ENCODE measurements at regions of chr11 and their contacts with region 1.

Region 1: DNA sequence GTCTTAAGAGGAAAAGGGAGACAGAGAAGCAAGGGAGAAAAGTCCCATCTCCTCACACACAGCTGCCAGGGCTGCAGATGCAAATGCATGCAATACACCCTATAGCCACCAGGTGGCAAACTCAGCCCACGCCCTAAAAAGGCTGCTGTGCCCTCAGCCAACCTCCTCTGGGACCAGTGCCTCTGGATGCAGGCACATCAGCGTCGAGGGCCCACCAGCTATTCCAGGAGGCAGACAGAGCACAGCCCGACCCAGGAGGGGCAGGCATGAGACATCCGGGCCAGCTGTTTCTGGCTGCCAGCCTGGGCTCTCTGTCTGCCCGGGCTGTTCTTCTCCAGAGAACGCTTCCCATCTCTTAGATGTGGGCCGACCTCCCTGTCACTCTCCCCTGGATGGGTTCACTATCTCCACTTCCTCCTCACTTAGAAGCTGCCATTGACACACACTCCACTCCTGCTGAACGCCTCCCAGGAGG is 39.7 kb downstream of the TPBGL start:
- DNase-seq: no peak
- H3K4me3 ChIP-seq: no peak overlapping the region
- CTCF ChIP-seq: peak; percentile 94

Region 2: DNA sequence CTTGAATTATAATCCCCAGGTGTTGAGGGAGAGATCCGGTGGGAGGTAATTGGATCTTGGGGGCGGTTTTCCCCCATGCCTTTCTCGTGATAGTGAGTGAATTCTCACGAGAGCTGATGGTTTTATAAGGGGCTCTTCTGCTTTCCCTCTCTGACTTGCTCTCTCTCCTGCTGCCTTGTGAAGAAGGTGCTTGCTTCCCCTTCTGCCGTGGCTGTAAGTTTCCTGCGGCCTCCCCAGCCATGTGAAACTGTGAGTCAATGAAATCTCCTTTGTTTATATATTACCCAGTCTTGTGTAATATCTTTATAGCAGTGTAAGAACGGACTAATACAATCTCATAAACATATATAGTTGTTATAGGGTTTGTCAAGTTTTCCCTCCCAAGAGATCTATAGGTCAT is 845.7 kb before region 1 on chr11:
- CTCF ChIA-PET with region 1: no interaction called
- POLR2A ChIA-PET with region 1: no interaction called
- DNase-seq: no peak
- H3K4me3 ChIP-seq: no peak overlapping the region
- CTCF ChIP-seq: no peak

Region 3: DNA sequence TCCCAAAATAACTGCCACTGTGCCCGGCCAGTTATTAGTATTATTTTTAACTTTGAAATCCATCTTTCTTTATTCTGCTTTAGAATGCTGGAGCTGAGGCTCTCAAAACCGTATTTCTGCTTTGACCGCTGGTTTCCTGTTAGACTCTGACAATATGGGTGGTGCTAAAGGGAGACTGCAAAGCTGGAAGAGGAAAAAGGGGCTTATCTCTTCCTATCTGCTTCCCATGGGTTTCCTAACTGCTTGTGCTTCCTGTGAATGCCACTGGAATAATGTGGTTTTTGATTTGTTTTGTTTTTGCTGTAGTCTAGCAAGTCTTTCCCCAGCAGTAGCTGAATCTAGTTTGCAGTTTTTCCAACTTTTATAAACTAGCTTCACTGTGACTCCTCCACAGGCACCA is 374.9 kb before region 1 on chr11:
- CTCF ChIA-PET with region 1: no interaction called
- POLR2A ChIA-PET with region 1: no interaction called
- DNase-seq: no peak
- H3K4me3 ChIP-seq: no peak overlapping the region
- CTCF ChIP-seq: no peak

Region 4: DNA sequence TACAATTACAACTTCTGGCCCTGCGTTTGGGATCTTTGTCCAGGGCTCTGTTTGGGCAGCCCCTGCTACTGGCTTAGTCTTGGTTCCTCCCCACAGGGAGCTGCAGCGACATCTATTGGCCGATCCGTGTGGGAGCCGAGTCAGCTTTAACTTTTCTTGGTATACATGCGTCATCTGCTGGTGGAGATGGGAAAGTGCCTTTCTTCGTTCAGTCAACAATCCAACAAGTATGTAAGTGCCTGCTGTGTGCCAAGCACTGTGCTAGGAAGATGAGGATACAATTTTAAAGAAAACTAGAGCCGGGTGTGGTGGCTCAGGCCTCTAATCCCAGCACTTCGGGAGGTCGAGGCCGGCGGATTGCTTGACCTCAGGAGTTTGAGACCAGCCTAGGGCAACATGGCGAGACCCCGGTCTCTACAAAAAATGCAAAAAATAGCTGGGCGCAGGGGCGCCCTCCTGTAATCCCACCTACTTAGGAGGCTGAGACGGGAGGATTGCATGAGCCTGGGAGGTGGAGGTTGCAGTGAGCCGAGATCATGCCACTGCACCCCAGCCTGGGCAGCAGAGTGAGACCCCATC is 31.5 kb before region 1 on chr11:
- CTCF ChIA-PET with region 1: interaction called, 11 read pairs
- POLR2A ChIA-PET with region 1: no interaction called
- DNase-seq: peak; percentile 37
- H3K4me3 ChIP-seq: no peak overlapping the region
- CTCF ChIP-seq: peak; percentile 96

Region 5: DNA sequence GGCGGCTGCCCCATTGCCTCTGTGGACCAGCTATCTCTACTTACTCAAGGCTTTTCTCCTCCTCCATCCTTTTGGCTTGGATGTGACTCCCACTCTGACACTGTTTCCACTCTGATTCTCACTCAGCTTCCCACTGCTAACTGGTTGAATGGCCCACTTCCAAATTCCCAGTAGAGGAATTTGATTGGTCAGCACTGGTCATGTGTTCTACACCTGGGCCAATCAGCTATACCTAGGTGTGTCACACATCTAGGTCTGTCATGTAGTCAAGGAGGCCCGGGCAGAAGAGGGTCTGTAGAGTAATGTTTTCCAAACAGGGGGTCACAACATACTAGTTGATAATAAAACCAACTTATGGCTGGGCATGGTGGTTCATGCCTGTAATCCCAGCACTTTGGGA is 13.6 kb after region 1 on chr11:
- CTCF ChIA-PET with region 1: interaction called, 78 read pairs
- POLR2A ChIA-PET with region 1: no interaction called
- DNase-seq: no peak
- H3K4me3 ChIP-seq: no peak overlapping the region
- CTCF ChIP-seq: no peak

Region 6: DNA sequence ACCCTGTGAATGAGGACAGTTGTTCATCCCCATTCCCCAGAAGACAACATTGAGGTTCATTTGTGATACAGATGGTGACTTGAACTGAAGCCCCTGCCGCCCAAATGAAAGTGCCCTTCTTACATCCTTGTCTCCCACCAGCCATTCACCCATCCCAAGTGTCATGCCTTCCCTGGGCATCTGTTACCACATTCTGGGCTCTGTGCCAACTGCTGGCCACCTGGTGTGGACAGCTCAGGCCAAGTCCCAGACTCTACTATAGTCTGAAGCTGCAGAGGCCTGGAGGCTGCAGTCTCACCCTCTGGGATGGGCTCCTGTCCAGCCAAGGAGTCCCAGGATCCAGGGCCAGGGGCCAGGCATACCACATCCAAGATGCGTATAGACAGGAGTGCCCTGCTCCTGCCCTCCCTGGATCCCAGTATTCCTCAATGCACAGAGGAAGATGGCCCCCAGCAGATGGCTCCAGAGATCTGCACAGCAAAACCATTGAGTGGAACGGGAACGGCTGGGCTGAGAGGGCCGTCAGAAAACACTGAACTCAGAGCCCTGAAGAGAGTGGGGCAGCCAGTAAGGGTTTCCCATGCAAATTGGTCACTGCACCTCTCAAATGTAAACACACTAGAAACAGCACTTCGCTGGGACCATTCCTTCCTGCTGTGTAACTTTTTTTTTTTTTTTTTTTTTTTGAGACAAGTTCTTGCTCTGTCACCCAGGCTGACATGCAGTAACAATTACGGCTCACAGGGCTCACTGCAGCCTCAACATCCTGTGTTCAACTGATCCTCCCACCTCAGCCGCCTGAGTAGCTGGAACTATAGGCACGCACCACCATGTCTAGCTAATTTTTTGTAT is 48.4 kb after region 1 on chr11:
- CTCF ChIA-PET with region 1: interaction called, 22 read pairs
- POLR2A ChIA-PET with region 1: no interaction called
- DNase-seq: peak; percentile 40
- H3K4me3 ChIP-seq: no peak overlapping the region
- CTCF ChIP-seq: peak; percentile 85

Region 7: DNA sequence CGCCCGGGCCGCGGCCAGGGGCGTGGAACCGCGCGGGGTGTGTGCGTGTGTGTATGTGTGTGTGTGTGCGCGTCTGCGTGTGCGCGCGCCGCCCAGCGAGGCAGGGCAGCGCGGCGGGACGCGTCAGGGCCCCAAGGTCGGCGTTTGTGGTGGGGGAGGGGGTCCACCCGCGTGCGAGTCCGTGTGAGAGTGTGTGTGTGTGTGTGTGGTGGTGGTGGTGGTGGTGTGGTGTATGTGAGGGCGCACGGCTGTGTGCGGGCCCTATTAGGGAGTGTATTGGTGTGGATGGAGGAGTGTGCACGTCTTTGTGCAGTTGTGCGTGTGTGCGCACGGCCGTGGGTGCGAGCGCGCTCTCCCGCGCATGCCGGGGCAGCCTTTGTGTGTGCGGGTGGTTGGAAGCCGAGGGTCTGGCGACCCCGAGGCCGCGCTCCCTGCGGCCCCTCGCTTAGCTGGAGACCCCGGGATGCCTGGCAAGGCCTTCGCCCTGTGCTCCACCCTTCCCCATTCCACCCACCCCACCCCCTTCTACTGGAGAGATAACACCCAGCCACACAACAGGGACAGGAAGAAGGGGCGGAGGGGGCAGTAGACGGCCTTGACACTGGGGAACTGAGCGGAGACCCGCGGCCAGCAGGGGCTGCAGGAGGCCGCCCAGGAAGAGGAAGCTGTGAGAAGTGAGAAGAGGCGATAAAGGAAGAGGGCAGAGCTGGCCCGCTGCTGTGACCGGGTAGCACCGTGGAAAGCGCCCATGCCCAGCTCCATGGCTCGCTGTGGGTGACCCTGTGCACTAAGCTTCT is 71.7 kb after region 1 on chr11:
- CTCF ChIA-PET with region 1: interaction called, 10 read pairs
- POLR2A ChIA-PET with region 1: no interaction called
- DNase-seq: no peak
- H3K4me3 ChIP-seq: peak overlapping the region; percentile 70
- CTCF ChIP-seq: peak; percentile 20

Measured in AG04449 (cell line).